Mammary epithelial cell (primary cell): ENCODE measurements at regions of chr17 and their contacts with region 1.

Region 1: DNA sequence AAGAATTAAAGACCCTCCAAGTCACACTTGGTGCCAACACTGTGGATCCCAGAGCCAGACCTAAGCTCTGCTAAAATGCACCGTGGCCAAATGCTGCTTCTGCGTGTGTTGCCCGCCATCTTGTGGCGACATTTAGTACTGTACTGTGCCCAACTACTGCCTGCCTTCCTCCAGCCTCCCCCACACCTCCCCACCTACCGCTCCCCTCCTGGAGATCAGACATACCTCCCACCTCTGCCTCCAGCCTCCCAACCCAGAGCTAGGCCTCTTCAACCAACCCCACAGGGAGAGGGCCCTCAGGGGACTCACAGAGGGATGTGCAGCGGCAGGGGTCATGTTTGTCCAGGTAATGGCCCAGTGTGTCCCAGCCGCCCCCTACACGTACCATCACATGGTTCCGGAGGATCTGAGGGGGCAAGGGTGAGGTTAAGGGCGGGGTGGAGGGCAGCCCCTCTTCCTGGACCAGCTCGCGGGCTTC is 5.5 kb downstream of the GAS2L2 start:
- DNase-seq: peak; percentile 50
- H3K4me3 ChIP-seq: no peak overlapping the region
- H3K27ac ChIP-seq: no peak overlapping the region
- H3K4me1 ChIP-seq: peaks cover 33% of the 10 kb centered on the region
- H3K27me3 ChIP-seq: no peaks in the 10 kb centered on the region
- CTCF ChIP-seq: peak; percentile 84 to 92

Region 2: GRCh38 chr17:34542700-34543336 is 1204.8 kb before region 1 on chr17:
- CTCF ChIA-PET with region 1: no interaction called
- dilution Hi-C with region 1: no loop called
- in situ Hi-C with region 1: no loop called
- intact Hi-C with region 1: loop called (anchors 5 kb)
- DNase-seq: no peak
- H3K4me3 ChIP-seq: no peak overlapping the region
- H3K27ac ChIP-seq: no peak overlapping the region
- H3K4me1 ChIP-seq: no peaks in the 10 kb centered on the region
- H3K27me3 ChIP-seq: no peaks in the 10 kb centered on the region
- CTCF ChIP-seq: peak; percentile 87 to 91

Region 3: DNA sequence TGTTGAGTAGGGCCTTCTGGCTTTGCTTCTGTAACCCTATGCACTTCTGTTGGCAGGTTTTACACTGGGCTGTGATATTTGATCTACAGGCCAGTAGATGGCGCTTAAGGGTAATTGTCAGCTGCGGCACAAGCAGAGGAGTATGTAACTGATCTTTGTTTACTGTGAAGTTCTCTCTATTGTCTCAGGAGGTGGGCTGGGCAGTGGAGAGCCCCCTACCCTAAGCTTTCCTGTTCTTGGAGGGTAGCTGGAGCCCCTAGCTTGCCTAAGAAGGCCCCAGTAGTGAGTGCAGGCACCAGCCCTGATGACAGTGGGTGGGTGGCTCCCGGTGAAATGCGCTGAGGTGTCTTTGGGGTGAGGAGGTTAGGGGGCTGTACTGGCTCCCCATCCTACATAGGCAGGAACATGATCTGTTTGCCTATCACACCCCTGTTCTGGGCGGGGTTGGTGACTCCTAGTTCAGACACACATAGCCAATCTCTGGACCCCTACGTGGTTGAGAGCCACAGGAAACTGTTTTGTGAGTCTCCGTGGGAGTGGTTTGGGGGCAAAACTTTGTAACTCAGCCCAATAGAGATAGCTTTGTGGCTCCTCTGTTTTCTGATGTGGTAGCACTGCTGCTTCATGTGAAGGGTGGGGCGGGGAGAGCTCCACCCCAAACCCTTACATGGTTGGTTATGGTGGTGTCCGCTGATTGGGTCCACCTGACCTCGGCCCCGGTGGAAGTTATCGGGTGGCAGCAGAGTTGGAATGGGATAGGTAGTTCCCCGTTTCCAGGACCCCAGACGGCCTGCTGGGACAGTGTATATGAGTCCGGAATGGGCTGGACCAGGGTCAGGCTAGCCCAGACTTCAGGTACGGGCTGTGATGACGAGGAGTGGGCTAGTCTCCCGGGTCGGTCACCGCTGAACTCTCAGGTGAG is 434.5 kb before region 1 on chr17:
- CTCF ChIA-PET with region 1: no interaction called
- dilution Hi-C with region 1: loop called (anchors 25 kb)
- in situ Hi-C with region 1: no loop called
- intact Hi-C with region 1: loop called (anchors 1 kb)
- DNase-seq: peak; percentile 48
- H3K4me3 ChIP-seq: no peak overlapping the region
- H3K27ac ChIP-seq: no peak overlapping the region
- H3K4me1 ChIP-seq: peaks cover 21% of the 10 kb centered on the region
- H3K27me3 ChIP-seq: no peaks in the 10 kb centered on the region
- CTCF ChIP-seq: peak; percentile 77 to 82

Region 4: DNA sequence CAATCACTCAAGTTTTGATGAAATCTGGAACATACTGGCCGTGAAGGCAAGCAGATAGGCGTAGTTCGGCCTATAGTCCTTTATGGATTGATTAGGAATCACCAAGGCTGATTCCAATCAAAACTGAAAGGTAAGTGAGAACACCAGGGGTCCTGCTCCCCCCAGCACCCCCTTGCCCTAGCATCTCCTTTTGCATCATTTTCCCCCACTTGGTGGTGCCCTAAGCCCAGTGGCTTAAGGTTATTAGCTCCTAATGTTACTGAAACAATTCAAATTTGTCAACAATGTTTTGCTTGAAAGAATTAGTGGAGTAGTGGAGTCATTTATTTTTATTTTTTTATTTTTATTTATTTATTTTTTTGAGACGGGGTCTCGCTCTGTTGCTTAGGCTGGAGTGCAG is 191.9 kb before region 1 on chr17:
- CTCF ChIA-PET with region 1: interaction called, 4 read pairs
- dilution Hi-C with region 1: no loop called
- in situ Hi-C with region 1: no loop called
- intact Hi-C with region 1: loop called (anchors 1 kb)
- DNase-seq: no peak
- H3K4me3 ChIP-seq: no peak overlapping the region
- H3K27ac ChIP-seq: no peak overlapping the region
- H3K4me1 ChIP-seq: no peaks in the 10 kb centered on the region
- H3K27me3 ChIP-seq: peaks cover 2% of the 10 kb centered on the region
- CTCF ChIP-seq: peak; percentile 9 to 38

Region 5: DNA sequence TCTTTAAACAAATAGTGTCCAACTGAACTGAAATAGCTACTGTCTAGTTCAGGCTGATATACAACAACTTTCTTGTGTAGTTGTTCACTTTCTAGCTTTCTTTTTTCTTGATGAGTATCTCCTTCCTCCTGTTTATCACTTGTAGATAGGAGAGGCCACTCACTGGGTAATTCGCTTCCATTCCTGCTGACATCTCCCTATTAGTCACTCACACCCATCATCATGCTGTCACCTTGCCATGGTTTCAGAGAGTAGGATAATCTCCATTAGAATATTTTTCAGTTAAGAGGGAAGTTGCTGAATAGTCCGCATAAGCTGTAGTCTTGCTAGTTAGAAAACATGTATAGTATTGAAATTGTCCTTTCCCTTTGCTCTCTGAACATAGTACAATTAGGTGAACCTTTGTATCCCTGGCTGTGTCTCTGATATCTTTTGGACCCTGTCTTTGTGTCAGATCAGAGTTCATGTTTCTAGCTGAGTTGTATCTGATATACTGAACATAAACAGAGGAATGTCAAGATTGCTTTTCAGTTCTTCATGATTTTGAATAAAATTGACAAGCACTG is 80.5 kb before region 1 on chr17:
- CTCF ChIA-PET with region 1: no interaction called
- dilution Hi-C with region 1: no loop called
- in situ Hi-C with region 1: no loop called
- intact Hi-C with region 1: no loop called
- DNase-seq: peak; percentile 9
- H3K4me3 ChIP-seq: no peak overlapping the region
- H3K27ac ChIP-seq: no peak overlapping the region
- H3K4me1 ChIP-seq: no peaks in the 10 kb centered on the region
- H3K27me3 ChIP-seq: no peaks in the 10 kb centered on the region
- CTCF ChIP-seq: no peak

Region 6: GRCh38 chr17:35884394-35884793 is 136.8 kb after region 1 on chr17:
- CTCF ChIA-PET with region 1: interaction called, 13 read pairs
- dilution Hi-C with region 1: no loop called
- in situ Hi-C with region 1: no loop called
- intact Hi-C with region 1: no loop called
- DNase-seq: no peak
- H3K4me3 ChIP-seq: no peak overlapping the region
- H3K27ac ChIP-seq: no peak overlapping the region
- H3K4me1 ChIP-seq: no peaks in the 10 kb centered on the region
- H3K27me3 ChIP-seq: no peaks in the 10 kb centered on the region
- CTCF ChIP-seq: no peak